HepG2 (cell line): ENCODE measurements at regions of chr16 and their contacts with region 1.

Region 1: GRCh38 chr16:65422934-65423333 is 301.1 kb upstream of the CDH11 start:
- DNase-seq: no peak
- ATAC-seq: no peak
- H3K4me3 ChIP-seq: no peak overlapping the region
- H3K27ac ChIP-seq: no peak overlapping the region
- H3K4me1 ChIP-seq: no peaks in the 10 kb centered on the region
- H3K27me3 ChIP-seq: no peaks in the 10 kb centered on the region
- CTCF ChIP-seq: no peak
- EP300 ChIP-seq: no peak
- POLR2A ChIP-seq: no peak
- RAD21 ChIP-seq: no peak

Region 2: DNA sequence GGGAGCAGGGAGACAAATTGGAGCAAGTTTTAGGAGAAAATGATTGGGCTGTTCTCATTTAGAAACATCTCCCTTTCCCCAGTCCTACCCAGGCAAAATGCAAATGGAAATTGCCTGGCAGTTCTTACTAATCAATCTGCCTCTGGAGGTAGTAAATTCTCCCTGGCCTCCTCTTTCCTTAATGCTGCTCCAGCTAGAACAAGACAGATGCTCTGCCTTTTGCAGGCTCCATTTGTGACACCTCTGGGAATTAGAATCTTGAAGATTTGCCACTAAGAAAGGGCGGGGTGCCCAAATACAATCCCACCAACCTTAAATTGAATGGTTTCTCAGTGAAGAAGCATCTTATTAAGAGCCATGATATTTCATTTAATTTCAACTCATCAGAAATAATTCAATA is 76.6 kb after region 1 on chr16:
- CTCF ChIA-PET with region 1: no interaction called
- POLR2A ChIA-PET with region 1: no interaction called
- in situ Hi-C with region 1: no loop called
- intact Hi-C with region 1: loop called (anchors 2 kb)
- DNase-seq: no peak
- ATAC-seq: no peak
- H3K4me3 ChIP-seq: no peak overlapping the region
- H3K27ac ChIP-seq: no peak overlapping the region
- H3K4me1 ChIP-seq: no peaks in the 10 kb centered on the region
- H3K27me3 ChIP-seq: no peaks in the 10 kb centered on the region; a peak in 1 of 5 replicates
- CTCF ChIP-seq: no peak
- EP300 ChIP-seq: no peak
- POLR2A ChIP-seq: no peak
- RAD21 ChIP-seq: no peak

Region 3: DNA sequence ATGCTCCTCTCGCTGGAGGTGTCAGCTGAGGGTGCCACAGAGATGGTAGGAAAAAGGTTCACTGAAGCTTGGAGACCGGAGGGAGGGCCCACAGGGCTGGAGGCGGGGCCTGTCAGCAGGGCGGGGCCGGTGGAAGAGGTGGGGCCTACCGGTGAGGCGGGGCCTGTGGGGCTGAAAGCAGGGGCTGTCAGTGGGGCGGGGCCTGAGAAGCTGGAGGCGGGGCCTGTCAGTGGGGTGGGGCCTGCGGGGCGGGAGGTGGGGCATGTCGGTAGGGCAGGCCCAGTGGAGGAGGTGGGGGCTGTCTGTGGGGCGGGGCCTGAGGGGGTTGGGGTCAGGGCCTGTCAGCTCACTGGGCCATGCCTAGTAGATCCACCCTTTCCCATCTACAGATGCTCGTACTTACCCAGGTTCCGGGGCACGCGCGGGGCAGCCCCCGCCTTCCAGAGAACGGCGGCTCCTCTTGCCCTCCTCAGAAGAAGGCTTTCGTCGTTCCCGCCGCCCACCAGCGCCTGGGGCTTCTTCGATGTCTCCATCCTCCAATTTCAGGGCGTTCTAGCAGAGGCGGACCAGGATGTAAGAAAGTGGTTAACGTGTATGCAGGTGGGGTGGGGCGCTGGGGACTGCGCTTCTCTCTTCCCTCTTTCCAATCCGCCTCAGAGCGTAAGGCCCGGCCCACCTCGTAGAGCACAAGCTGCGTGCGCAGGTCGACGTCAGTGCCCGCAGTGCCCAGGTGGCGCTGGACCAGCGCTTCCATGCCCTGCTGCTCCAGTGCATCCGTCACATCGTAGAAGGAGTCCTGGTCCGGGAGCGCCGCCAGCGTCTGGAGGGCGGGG is 1813.8 kb after region 1 on chr16:
- CTCF ChIA-PET with region 1: no interaction called
- POLR2A ChIA-PET with region 1: no interaction called
- in situ Hi-C with region 1: no loop called
- intact Hi-C with region 1: no loop called
- DNase-seq: peak; percentile 46
- ATAC-seq: peak; percentile 68
- H3K4me3 ChIP-seq: no peak overlapping the region
- H3K27ac ChIP-seq: no peak overlapping the region
- H3K4me1 ChIP-seq: peaks cover 14% of the 10 kb centered on the region
- H3K27me3 ChIP-seq: no peaks in the 10 kb centered on the region
- CTCF ChIP-seq: no peak
- EP300 ChIP-seq: no peak
- POLR2A ChIP-seq: no peak
- RAD21 ChIP-seq: no peak